ENCODE measurements at regions of chr2 and their contacts with region 1.

Region 1: DNA sequence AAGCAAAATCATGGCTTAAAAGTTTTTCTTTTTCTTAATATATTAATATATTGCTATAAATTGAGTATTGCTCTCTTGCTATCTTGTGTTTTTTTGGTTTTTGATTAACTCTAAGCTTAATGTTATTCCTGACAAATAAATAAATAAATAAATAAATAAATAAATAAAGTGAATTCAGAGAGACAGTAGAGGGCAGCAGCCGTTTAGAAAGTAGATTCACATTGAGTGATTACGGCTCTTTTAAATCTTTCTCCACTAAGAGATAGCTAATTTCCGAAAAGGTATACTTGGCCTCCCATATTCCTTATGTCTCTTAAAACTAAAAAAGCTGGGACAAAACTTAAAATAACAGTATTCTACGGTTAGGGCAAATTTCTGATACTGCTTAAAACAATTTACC is 34.3 kb downstream of the MSH2 start:
- DNase-seq: no peak
- H3K4me3 ChIP-seq: no peak overlapping the region
- H3K27ac ChIP-seq: no peak overlapping the region
- H3K4me1 ChIP-seq: no peaks in the 10 kb centered on the region
- H3K27me3 ChIP-seq: no peaks in the 10 kb centered on the region
- CTCF ChIP-seq: peak in 2 of 4 experiments; percentile 20 to 57
- POLR2A ChIP-seq: no peak

Region 2: DNA sequence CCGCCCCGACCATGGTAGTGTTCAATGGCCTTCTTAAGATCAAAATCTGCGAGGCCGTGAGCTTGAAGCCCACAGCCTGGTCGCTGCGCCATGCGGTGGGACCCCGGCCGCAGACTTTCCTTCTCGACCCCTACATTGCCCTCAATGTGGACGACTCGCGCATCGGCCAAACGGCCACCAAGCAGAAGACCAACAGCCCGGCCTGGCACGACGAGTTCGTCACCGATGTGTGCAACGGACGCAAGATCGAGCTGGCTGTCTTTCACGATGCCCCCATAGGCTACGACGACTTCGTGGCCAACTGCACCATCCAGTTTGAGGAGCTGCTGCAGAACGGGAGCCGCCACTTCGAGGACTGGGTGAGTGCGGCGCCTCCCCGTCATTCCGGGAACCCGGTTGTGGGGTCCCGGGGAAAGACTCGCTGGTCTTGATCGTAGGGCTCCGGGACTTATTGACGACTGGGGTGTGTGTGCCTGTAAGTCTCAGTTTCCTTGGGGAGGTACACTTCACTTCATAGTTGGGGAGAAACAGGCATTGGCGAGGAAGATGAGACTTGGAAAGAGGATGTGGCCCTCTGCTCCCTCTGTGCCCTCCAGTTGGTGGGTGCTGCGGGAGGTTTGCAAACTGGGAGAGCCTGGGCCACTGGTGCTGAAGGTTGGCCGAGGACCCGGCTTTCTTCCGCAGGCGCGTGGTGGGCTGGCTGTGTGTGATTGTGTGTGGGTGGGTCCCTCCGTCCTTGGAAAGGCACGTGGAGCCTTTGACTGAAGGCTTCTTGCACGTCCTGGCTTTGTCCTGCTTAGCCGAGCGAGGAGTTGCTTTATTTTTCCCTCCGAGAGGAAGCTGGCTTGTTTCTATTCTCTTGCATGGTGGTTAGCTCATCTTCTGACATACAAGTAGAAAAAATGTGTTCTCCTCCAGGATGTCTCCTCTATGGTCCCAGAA is 1784.9 kb before region 1 on chr2:
- intact Hi-C with region 1: no loop called
- DNase-seq: peak; percentile 23
- H3K4me3 ChIP-seq: peak overlapping the region; percentile 91 to 98
- H3K27ac ChIP-seq: peak overlapping the region; percentile 98 to 100
- H3K4me1 ChIP-seq: peaks cover 10% of the 10 kb centered on the region
- H3K27me3 ChIP-seq: no peaks in the 10 kb centered on the region
- CTCF ChIP-seq: no peak
- POLR2A ChIP-seq: no peak

Region 3: GRCh38 chr2:47767880-47768609 is 330.8 kb after region 1 on chr2:
- intact Hi-C with region 1: loop called (anchors 5 kb)
- DNase-seq: peak; percentile 38
- H3K4me3 ChIP-seq: no peak overlapping the region
- H3K27ac ChIP-seq: no peak overlapping the region
- H3K4me1 ChIP-seq: no peaks in the 10 kb centered on the region
- H3K27me3 ChIP-seq: no peaks in the 10 kb centered on the region
- CTCF ChIP-seq: peak; percentile 91 to 96 (median 94)
- POLR2A ChIP-seq: no peak